ENCODE measurements at regions of chr6 and their contacts with region 1.

Region 1: DNA sequence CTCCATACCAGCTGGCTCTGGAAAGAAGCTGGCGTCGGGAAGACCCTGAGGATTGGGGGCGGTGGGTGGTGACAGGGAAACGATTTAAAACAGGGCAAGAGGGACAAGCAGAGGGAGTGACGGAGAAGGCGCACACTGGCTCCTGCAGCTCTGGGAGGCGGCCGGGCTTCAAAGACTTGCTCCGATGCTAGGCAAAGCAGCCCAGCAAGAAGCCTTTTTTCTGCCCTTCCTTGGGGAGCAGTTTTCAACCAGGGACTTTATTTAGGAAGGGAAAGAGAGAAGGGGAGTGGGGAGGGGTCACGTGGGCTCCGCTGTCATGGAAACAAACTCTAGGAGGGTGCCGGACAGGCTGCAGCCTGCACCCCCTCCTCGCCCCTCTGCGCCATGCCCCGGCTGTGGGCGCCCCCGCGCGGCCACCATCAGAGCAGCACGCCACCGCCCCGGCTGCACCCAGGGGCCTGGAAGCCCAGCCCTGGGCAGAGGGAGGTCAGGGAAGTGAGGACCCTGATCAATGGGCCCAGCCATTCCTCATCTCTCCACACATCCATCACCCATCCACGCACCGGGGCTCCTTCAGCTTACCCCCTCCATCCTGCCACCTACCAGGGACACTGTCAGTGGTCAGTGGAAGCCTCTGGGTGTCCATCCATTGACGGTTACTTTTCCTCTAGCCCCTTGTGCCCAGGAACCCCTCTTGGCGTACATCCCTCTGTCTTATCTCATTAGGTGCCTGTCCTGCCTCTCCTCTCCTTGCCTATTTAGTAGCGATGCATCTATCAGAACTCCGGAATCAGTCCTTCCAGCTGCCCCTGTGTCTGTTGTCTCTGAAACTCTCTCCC is 66.6 kb upstream of the CCDC167 start:
- DNase-seq: peak in 4 of 5 donors; percentile 36 to 78 (median 54)
- ATAC-seq: peak; percentile 37 to 88 (median 77)
- H3K4me3 ChIP-seq: peak overlapping the region; percentile 21 to 54 (median 43)
- H3K27ac ChIP-seq: peak overlapping the region in 1 of 12 donors; percentile 18
- H3K4me1 ChIP-seq: peaks cover 0 to 21% (median 11%) of the 10 kb centered on the region in 12 donors
- H3K27me3 ChIP-seq: peaks cover 0 to 26% (median 8%) of the 10 kb centered on the region in 9 donors
- CTCF ChIP-seq: peak; percentile 73 to 92 (median 81)
- POLR2A ChIP-seq: no peak

Region 2: DNA sequence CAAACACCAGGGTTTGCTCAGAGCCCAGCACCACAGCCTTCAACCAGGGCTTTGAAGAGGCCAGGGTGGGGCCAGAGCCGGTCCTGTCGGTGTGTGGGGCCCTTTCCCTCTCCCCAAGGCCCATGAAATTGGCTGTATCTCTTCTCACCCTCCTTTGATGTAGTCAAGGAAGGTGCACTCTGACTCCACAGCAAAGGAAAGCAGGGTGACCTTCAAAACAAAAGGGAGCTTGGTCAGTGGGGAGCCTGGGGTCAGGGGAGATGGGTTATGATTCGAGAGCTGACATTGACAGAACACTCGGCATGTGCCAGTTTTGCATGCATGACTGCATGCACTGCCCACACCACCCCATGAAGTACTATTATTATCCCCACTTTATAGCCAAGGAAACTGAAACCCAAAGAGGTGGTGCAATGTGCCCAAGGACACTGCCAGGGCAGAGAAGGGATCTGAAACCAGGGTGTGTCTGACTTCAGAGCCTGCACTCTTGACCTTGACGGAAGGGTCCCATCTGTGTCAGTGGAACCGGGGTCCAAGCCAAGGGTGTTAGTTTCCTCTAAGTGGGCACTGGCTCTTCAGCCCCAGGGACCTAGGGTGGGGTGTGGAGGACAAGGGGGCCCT is 813.3 kb before region 1 on chr6:
- intact Hi-C with region 1: no loop called
- DNase-seq: no peak
- ATAC-seq: peak in 3 of 4 donors; percentile 25 to 58 (median 28)
- H3K4me3 ChIP-seq: no peak overlapping the region
- H3K27ac ChIP-seq: peak overlapping the region in 1 of 12 donors; percentile 52
- H3K4me1 ChIP-seq: peaks cover 0 to 67% (median 1%) of the 10 kb centered on the region in 12 donors
- H3K27me3 ChIP-seq: no peaks in the 10 kb centered on the region
- CTCF ChIP-seq: no peak
- POLR2A ChIP-seq: no peak

Region 3: DNA sequence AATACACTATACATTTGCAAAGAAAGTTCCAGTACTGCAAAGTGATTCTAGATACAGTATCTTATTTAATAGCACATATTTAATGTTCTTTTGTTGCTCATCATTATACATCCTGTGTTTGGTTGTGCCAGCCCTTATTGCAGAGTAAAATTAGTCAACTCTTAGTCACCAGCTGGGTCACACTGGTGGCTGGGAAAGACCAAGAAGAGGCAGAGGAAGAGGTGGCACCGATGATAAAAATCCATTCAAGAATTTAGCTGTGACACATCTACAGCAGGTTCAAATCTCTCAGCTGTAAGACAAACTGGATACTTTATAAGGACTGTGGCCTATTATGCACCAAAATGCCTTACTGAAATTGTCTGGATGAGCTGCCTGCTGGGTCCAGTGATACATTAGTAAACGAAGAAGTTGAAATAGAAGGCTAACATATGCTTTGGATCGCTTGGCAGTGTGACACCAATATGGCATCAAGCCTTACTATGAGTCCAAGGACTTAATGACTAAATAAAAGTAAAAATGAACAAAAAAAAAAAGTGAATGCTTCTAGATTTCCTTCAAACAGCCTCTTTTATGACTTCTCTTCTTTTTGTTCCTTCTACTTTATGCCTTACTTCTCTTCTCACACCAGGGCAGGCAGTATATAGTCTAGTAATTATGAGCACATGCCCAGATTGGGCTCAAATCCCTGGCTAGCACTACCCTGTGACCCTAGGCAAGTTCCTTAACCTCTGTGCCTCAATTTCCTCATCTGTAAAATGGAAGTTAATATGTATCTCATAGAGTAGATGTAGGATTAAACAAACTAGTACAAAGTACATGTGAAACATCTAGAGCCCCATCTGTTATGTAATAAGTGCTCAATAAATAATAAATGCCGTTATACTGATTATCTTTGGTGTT is 241.9 kb before region 1 on chr6:
- intact Hi-C with region 1: loop called in 7 of 10 experiments (anchors 2 to 10 kb)
- DNase-seq: no peak
- ATAC-seq: no peak
- H3K4me3 ChIP-seq: no peak overlapping the region
- H3K27ac ChIP-seq: no peak overlapping the region
- H3K4me1 ChIP-seq: peaks cover 0 to 19% (median 10%) of the 10 kb centered on the region in 12 donors
- H3K27me3 ChIP-seq: no peaks in the 10 kb centered on the region
- CTCF ChIP-seq: no peak
- POLR2A ChIP-seq: no peak

Region 4: GRCh38 chr6:37373822-37374471 is 192.4 kb before region 1 on chr6:
- intact Hi-C with region 1: loop called in 3 of 10 experiments (anchors 5 kb)
- DNase-seq: no peak
- ATAC-seq: no peak
- H3K4me3 ChIP-seq: no peak overlapping the region
- H3K27ac ChIP-seq: no peak overlapping the region
- H3K4me1 ChIP-seq: peaks cover 0 to 33% (median 12%) of the 10 kb centered on the region in 12 donors
- H3K27me3 ChIP-seq: no peaks in the 10 kb centered on the region
- CTCF ChIP-seq: no peak
- POLR2A ChIP-seq: no peak

Region 5: GRCh38 chr6:37483917-37484785 is 82.2 kb before region 1 on chr6:
- intact Hi-C with region 1: loop called (anchors 2 to 10 kb)
- DNase-seq: peak; percentile 53 to 81 (median 60)
- ATAC-seq: peak; percentile 28 to 72 (median 64)
- H3K4me3 ChIP-seq: no peak overlapping the region
- H3K27ac ChIP-seq: no peak overlapping the region
- H3K4me1 ChIP-seq: peaks cover 0 to 39% (median 8%) of the 10 kb centered on the region in 12 donors
- H3K27me3 ChIP-seq: no peaks in the 10 kb centered on the region
- CTCF ChIP-seq: peak; percentile 65 to 83 (median 76)
- POLR2A ChIP-seq: no peak

Region 6: GRCh38 chr6:37691904-37692806 is 125.8 kb after region 1 on chr6:
- intact Hi-C with region 1: loop called in 3 of 10 experiments (anchors 5 to 10 kb)
- DNase-seq: peak; percentile 62 to 81 (median 68)
- ATAC-seq: peak; percentile 62 to 87 (median 86)
- H3K4me3 ChIP-seq: no peak overlapping the region
- H3K27ac ChIP-seq: no peak overlapping the region
- H3K4me1 ChIP-seq: peaks cover 6 to 19% (median 15%) of the 10 kb centered on the region in 12 donors
- H3K27me3 ChIP-seq: peaks cover 0 to 48% (median 23%) of the 10 kb centered on the region in 9 donors
- CTCF ChIP-seq: peak; percentile 91 to 98 (median 96)
- POLR2A ChIP-seq: no peak

Region 7: GRCh38 chr6:37903351-37904340 is 337.3 kb after region 1 on chr6:
- intact Hi-C with region 1: no loop called
- DNase-seq: no peak
- ATAC-seq: no peak
- H3K4me3 ChIP-seq: no peak overlapping the region
- H3K27ac ChIP-seq: no peak overlapping the region
- H3K4me1 ChIP-seq: peaks cover 0 to 21% (median 12%) of the 10 kb centered on the region in 12 donors
- H3K27me3 ChIP-seq: no peaks in the 10 kb centered on the region
- CTCF ChIP-seq: no peak
- POLR2A ChIP-seq: no peak